Gastrocnemius medialis (tissue), 4 donors: ENCODE measurements at regions of chr9 and their contacts with region 1.

Region 1: DNA sequence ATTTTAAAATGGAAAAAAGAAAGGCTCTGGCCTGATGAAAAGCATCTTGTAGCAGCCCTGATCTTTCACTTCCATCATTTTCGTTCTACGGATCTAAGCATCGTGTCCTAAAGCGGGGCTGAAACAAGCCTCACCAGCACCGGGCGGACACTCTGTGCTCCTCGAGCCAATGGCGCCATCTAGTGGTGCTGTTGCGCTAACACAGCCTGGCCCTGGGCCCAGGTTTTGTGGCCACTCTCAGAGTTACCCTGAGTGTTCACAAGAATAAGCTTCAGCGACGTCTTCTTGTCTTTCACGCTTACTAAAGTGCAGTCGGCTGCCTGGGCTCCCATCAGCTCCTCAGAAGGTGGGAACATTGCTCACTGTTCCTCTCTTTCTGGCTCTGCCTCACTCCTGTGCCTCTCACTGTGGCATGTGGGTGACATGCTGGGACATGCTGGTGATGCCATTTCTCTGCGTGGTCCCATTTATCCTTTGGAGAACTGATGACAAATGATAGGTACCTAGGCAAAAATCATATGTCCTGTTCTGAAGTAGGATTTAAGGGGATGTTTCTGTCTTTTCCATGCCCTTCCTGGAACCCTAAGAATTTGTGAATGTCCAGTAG is 32.7 kb downstream of the DMRT3 start:
- DNase-seq: peak; percentile 32 to 67
- ATAC-seq: peak; percentile 88 to 92
- H3K4me3 ChIP-seq: no peak overlapping the region
- H3K27ac ChIP-seq: no peak overlapping the region
- H3K4me1 ChIP-seq: no peaks in the 10 kb centered on the region
- H3K27me3 ChIP-seq: no peaks in the 10 kb centered on the region
- CTCF ChIP-seq: peak; percentile 87 to 99 (median 94)
- POLR2A ChIP-seq: no peak

Region 2: GRCh38 chr9:347667-348292 is 661.4 kb before region 1 on chr9:
- in situ Hi-C with region 1: no loop called
- intact Hi-C with region 1: loop called (anchors 2 kb)
- DNase-seq: no peak
- ATAC-seq: peak; percentile 51 to 72
- H3K4me3 ChIP-seq: no peak overlapping the region
- H3K27ac ChIP-seq: no peak overlapping the region
- H3K4me1 ChIP-seq: no peaks in the 10 kb centered on the region
- H3K27me3 ChIP-seq: peaks cover 0 to 9% (median 0%) of the 10 kb centered on the region in 3 donors
- CTCF ChIP-seq: peak; percentile 40 to 70 (median 56)
- POLR2A ChIP-seq: no peak

Region 3: GRCh38 chr9:792282-793260 is 216.6 kb before region 1 on chr9:
- in situ Hi-C with region 1: loop called in 1 of 4 experiments (anchors 25 kb)
- intact Hi-C with region 1: no loop called
- DNase-seq: no peak
- ATAC-seq: no peak
- H3K4me3 ChIP-seq: no peak overlapping the region
- H3K27ac ChIP-seq: no peak overlapping the region
- H3K4me1 ChIP-seq: no peaks in the 10 kb centered on the region
- H3K27me3 ChIP-seq: no peaks in the 10 kb centered on the region
- CTCF ChIP-seq: no peak
- POLR2A ChIP-seq: no peak

Region 4: GRCh38 chr9:893843-894420 is 115.3 kb before region 1 on chr9:
- in situ Hi-C with region 1: loop called (anchors 5 to 10 kb)
- intact Hi-C with region 1: loop called (anchors 1 kb)
- DNase-seq: peak; percentile 10 to 14
- ATAC-seq: peak; percentile 66 to 74
- H3K4me3 ChIP-seq: peak overlapping the region in 1 of 4 donors; percentile 22
- H3K27ac ChIP-seq: no peak overlapping the region
- H3K4me1 ChIP-seq: no peaks in the 10 kb centered on the region
- H3K27me3 ChIP-seq: peaks cover 0 to 4% (median 0%) of the 10 kb centered on the region in 3 donors
- CTCF ChIP-seq: peak; percentile 30 to 74 (median 61)
- POLR2A ChIP-seq: no peak